Naive thymus-derived CD4-positive, alpha-beta T cell (primary cell): ENCODE measurements at regions of chr9 and their contacts with region 1.

Region 1: DNA sequence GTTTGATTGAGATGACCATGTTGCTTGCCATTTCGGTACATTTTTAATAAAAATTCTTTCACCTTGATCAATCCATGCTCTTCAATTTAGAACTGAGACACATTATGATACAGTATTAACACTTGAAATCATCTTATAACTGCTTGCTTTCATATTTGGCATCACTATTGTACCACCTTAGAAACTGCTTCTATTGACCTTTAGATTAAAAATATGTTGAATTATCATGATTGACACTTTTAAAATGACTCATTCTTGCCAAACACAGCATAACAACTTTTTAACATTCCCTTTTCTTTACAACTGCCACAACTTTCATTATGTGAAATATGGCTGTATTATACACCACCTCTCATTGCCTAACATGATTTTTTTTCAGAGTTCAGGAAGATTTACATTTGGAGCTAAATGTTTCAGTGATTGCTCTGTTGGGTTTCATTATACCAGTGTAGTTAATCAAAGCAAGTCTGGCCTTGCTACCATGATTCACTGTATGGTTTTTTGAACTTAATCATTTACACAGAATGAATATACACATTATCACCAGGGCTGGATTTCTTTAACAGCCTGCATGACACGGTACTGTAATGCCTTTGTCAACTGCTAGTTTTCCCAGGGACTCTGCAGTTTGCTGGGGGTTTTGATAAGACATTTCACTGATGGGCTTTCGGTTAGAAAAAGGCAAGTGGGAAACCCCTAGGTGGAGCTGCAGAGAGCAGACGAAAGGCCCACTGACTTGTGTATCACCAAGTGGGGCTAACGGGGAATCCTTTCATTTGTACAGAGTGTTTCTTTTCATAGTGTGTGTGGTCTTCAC is 93.6 kb upstream of the TLE4 start:
- DNase-seq: peak in 6 of 9 donors; percentile 12 to 37 (median 22)
- ATAC-seq: peak; percentile 58
- H3K4me3 ChIP-seq: no peak overlapping the region
- H3K4me3 Mint-ChIP-seq: no peak overlapping the region
- H3K27ac ChIP-seq: no peak overlapping the region
- H3K27ac Mint-ChIP-seq: no peak overlapping the region
- H3K4me1 ChIP-seq: peaks cover 0 to 3% of the 10 kb centered on the region in 2 donors
- H3K4me1 Mint-ChIP-seq: peaks cover 0 to 5% (median 0%) of the 10 kb centered on the region in 7 donors
- H3K27me3 ChIP-seq: no peaks in the 10 kb centered on the region
- H3K27me3 Mint-ChIP-seq: no peaks in the 10 kb centered on the region

Region 2: GRCh38 chr9:79701651-79702050 is 223.5 kb after region 1 on chr9:
- CTCF ChIA-PET with region 1: no interaction called
- POLR2A ChIA-PET with region 1: no interaction called
- intact Hi-C with region 1: loop called in 1 of 2 experiments (anchors 10 kb)
- DNase-seq: no peak
- ATAC-seq: peak; percentile 91
- H3K4me3 ChIP-seq: no peak overlapping the region
- H3K4me3 Mint-ChIP-seq: no peak overlapping the region
- H3K27ac ChIP-seq: no peak overlapping the region
- H3K27ac Mint-ChIP-seq: peak overlapping the region in 3 of 9 donors; percentile 35 to 76 (median 41)
- H3K4me1 ChIP-seq: no peaks in the 10 kb centered on the region
- H3K4me1 Mint-ChIP-seq: peaks cover 7 to 47% (median 37%) of the 10 kb centered on the region in 7 donors
- H3K27me3 ChIP-seq: no peaks in the 10 kb centered on the region
- H3K27me3 Mint-ChIP-seq: no peaks in the 10 kb centered on the region